Breast epithelium (tissue), 4 donors: ENCODE measurements at regions of chr22 and their contacts with region 1.

Region 1: GRCh38 chr22:42887523-42888507 is 30.7 kb upstream of the ARFGAP3 start:
- DNase-seq: no peak
- H3K4me3 ChIP-seq: no peak overlapping the region
- H3K27ac ChIP-seq: no peak overlapping the region
- H3K4me1 ChIP-seq: no peaks in the 10 kb centered on the region
- H3K27me3 ChIP-seq: no peaks in the 10 kb centered on the region
- CTCF ChIP-seq: no peak
- POLR2A ChIP-seq: no peak

Region 2: GRCh38 chr22:41816181-41816621 is 1071.6 kb before region 1 on chr22:
- intact Hi-C with region 1: no loop called
- DNase-seq: no peak
- H3K4me3 ChIP-seq: no peak overlapping the region
- H3K27ac ChIP-seq: no peak overlapping the region
- H3K4me1 ChIP-seq: no peaks in the 10 kb centered on the region
- H3K27me3 ChIP-seq: no peaks in the 10 kb centered on the region
- CTCF ChIP-seq: no peak
- POLR2A ChIP-seq: no peak

Region 3: DNA sequence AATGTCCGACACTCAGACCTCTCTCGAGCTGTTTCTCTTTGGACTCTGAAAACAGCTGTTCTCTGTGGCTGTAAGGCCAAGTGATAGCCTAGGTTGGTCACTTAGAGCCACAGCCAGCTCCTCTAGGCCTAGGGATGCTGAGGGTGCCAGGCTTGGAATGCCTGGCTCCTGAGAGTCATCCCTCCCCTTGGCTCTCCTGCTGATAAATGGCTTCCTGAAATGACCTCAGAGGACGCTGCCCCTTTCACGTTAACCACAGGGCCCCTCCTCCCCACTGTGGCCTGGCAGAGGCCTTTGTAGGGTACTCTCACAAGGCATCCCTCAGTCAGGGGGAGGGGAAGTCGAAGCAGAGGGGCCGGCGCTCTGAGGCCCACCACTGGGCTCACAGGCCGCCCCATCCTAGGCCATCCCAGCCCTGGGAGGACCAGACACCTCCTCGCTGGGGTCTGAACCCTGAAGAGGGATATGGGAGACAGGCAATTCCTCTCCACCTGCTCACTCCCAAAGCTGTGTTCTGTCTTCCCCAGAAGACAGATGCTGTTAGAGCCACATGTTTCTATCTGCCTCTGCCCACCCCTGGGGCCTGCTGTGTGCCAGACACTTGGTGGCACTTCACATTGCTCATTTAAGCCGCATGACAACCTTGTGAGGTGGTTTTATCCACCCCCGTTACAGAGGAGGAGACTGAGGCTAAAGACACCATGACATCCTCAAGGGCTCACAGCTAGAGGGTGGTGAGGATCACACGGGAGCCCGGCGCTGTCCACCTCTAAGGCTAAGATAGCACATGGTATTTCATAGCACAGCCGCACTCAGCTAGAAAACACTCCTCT is 81.6 kb before region 1 on chr22:
- intact Hi-C with region 1: no loop called
- DNase-seq: peak in 1 of 2 donors; percentile 40
- H3K4me3 ChIP-seq: peak overlapping the region in 1 of 3 donors; percentile 3
- H3K27ac ChIP-seq: peak overlapping the region; percentile 95 to 99
- H3K4me1 ChIP-seq: peaks cover 8 to 14% of the 10 kb centered on the region in 2 donors
- H3K27me3 ChIP-seq: no peaks in the 10 kb centered on the region
- CTCF ChIP-seq: no peak
- POLR2A ChIP-seq: no peak

Region 4: DNA sequence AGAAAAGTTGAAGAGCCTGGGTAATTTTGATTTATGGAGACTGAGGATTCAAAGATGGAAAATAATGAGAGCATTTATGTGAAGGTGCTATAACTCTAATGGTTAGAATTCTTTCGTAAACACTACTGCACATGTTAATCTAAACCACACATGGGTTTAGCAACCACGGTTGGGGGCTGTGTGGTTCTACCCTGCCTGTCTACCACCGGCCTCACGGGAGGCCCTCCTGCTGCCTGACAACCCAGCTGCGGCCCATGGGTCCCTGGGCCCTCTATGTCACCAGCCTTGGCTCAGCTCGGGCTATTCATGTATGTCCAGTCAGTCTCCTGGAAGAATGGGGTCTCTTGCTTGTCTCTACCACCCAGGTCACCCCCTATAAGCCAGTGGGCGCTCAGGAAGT is 37.8 kb after region 1 on chr22:
- intact Hi-C with region 1: loop called (anchors 1 kb)
- DNase-seq: no peak
- H3K4me3 ChIP-seq: no peak overlapping the region
- H3K27ac ChIP-seq: peak overlapping the region; percentile 45 to 53
- H3K4me1 ChIP-seq: peaks cover 12 to 23% of the 10 kb centered on the region in 2 donors
- H3K27me3 ChIP-seq: no peaks in the 10 kb centered on the region
- CTCF ChIP-seq: no peak
- POLR2A ChIP-seq: no peak